HEK293T (cell line): ENCODE measurements at regions of chr17 and their contacts with region 1.

Region 1: DNA sequence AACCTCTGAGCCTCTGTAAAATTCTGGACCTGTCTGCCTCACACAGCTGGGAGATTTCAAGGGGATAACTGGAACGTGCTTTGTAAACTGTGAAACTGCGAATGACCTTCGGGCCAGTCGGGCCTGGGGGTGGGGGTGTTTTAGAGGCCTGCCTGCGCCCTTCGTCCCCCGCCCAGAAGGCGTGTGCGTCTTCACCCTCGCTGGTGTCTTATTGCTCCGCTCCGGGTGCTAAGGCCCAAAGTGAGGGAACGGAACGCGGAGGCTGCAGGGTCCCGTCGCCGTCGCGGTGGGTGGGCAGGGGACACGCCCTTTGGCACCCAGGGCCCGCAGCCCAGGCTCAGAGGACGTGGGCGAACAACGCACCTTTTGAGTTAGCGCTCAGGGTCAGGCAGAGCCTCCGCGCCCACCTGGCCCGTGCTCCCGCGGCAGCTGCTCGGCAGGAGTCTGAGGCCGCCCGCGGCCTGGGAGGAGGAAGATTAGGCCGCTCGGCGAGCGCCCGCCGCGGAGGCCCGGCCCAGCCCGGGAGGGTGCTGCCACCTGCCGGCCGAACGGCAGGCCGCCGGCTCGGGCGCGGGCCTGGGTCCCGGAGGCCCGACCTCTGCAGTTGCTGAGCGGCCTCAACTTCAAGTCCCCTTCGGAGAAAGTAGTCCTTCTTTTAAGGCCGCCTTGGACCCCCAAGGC is 29.7 kb downstream of the DCAKD start:
- DNase-seq: peak; percentile 89

Region 2: GRCh38 chr17:45009676-45010467 is 11.9 kb before region 1 on chr17:
- CTCF ChIA-PET with region 1: interaction called, 11 read pairs
- POLR2A ChIA-PET with region 1: no interaction called
- DNase-seq: no peak

Region 3: DNA sequence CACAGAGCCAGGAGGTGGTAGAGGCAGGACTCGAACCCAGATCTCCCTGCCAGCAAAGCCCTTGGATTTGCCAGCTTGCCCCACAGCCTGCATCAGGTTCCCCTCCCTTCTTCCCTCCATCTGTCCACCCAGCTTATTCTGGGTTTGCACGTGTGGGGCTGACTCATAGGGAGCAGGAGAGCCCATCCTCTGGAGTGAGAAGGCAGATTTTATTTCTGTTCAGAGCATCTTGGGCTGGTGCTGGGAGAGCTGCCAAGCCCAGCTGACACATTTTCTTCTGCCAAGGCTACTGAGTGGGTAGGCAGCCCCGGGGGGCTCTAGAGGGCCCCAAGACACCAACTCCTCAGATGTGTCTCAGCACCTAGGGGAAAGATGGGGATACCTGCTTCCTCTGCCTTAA is 656.0 kb after region 1 on chr17:
- CTCF ChIA-PET with region 1: no interaction called
- POLR2A ChIA-PET with region 1: no interaction called
- DNase-seq: no peak